ENCODE measurements at regions of chr22 and their contacts with region 1.

Region 1: GRCh38 chr22:50209893-50210292 is 9.1 kb downstream of the SELENOO start:
- DNase-seq: peak; percentile 54 to 85 (median 67)
- H3K4me3 ChIP-seq: no peak overlapping the region
- H3K27ac ChIP-seq: no peak overlapping the region
- H3K4me1 ChIP-seq: peaks cover 0 to 8% (median 3%) of the 10 kb centered on the region in 3 donors
- H3K27me3 ChIP-seq: no peaks in the 10 kb centered on the region
- CTCF ChIP-seq: peak; percentile 83

Region 2: DNA sequence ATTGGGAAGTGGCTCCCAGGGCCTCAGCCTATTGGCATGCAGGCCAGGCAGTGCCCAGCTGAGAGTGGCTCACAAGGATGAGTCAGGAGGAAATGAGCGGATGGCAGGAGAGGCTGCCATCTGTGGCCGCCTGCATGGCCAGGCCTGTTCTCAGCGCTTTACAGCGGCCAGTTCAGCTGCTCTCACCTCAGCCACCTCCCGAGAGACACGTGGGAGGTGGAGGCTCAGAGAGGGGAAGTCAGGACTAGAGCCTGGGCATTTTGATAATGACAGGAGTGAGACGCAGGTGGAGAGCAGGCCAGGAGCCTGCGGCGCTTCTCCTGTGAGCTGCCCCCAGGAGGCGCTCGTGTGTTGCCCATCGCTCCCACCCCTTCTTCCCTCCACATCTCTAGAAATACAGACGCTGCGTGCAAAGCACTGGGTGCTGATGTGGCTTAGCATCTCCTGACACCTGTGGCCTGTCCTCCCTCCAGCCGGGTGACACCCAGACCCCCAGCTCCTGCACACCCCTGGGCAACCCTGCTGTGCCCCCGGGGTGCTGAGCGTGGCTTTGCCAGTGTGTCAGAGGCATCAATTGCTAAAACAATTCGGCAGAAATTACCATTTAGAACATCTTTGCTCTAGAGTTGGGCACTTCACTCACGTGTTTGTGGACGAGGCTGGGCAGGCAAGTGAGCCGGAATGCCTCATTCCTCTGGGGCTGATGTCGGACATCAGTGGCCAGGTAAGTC is 60.7 kb before region 1 on chr22:
- intact Hi-C with region 1: loop called (anchors 5 kb)
- DNase-seq: peak in 4 of 5 donors; percentile 47 to 80 (median 56)
- H3K4me3 ChIP-seq: no peak overlapping the region
- H3K27ac ChIP-seq: no peak overlapping the region
- H3K4me1 ChIP-seq: peaks cover 0 to 6% (median 0%) of the 10 kb centered on the region in 3 donors
- H3K27me3 ChIP-seq: no peaks in the 10 kb centered on the region
- CTCF ChIP-seq: peak; percentile 70